IMR-90 (cell line): ENCODE measurements at regions of chr4 and their contacts with region 1.

Region 1: GRCh38 chr4:106253364-106254129 is 62.5 kb downstream of the TBCK start:
- DNase-seq: no peak
- ATAC-seq: no peak
- H3K4me3 ChIP-seq: no peak overlapping the region
- H3K27ac ChIP-seq: no peak overlapping the region
- H3K4me1 ChIP-seq: no peaks in the 10 kb centered on the region
- H3K27me3 ChIP-seq: no peaks in the 10 kb centered on the region
- CTCF ChIP-seq: no peak
- POLR2A ChIP-seq: no peak
- RAD21 ChIP-seq: no peak

Region 2: DNA sequence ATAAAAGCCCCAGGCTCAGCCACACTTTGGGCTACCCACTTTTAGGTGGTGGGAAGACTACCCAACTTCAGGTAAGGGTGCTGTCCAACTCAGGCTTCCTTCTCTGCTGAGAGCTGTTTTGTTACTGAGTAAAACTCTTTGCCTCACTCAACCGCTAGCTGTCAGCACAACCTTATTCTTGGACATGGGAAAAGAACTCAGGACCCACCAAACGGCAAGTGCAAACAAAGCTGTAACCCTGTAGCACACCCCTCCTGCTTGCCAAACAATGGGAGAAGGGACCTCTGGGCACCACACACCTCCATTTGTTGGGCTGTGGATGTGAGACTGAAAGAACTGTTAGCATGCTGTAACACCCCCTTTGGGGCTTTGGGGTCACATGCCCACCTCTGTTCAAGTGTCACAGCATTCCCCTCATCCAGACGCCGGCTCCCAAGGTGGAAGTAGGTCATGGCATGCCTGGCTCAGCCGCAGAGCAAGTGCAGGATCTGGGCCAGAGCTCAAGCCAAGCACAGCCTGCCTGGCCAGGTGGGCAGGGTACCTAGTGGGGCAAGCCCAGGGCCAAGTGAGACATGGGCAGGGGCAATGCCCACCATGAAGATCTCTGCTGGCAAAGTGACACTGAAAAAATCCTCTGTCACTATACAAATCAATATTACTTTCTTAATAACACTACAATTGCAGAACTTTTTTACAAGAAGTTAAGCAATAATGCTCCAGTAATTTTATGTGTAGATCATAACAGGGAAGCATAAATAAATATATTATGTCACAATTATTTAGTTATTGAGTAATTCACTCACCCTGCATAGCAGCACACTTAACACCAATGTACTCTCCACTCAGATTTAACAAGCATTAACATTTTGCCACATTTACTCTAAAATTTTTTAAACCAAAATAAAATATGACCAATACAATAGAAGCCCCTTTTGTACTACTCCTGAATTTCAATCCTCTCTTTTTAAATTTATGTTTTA is 44.8 kb before region 1 on chr4:
- CTCF ChIA-PET with region 1: no interaction called
- POLR2A ChIA-PET with region 1: no interaction called
- dilution Hi-C with region 1: no loop called
- in situ Hi-C with region 1: no loop called
- intact Hi-C with region 1: loop called (anchors 1 kb)
- DNase-seq: no peak
- ATAC-seq: no peak
- H3K4me3 ChIP-seq: no peak overlapping the region
- H3K27ac ChIP-seq: no peak overlapping the region
- H3K4me1 ChIP-seq: no peaks in the 10 kb centered on the region
- H3K27me3 ChIP-seq: no peaks in the 10 kb centered on the region
- CTCF ChIP-seq: no peak
- POLR2A ChIP-seq: no peak
- RAD21 ChIP-seq: no peak

Region 3: DNA sequence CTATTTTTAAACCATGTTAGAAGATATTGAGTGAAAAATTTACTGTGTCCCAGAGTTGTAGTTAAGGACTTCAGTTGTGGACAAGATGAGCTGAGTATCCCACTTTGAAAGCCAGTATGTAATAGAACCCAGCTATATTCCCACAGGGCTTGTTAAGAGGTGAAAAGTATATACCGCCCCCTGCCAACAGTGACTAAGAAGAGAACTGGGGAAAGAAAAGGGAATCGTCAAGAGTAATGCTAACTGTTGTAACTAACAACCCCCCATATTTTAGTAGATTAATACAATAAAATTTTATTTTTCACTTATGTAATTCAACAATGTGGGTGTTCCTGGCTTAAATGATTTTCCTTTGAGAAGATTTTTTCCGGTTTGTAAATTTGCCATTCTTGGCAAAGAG is 365.4 kb after region 1 on chr4:
- CTCF ChIA-PET with region 1: no interaction called
- POLR2A ChIA-PET with region 1: no interaction called
- dilution Hi-C with region 1: no loop called
- in situ Hi-C with region 1: no loop called
- intact Hi-C with region 1: no loop called
- DNase-seq: no peak
- ATAC-seq: no peak
- H3K4me3 ChIP-seq: no peak overlapping the region
- H3K27ac ChIP-seq: no peak overlapping the region
- H3K4me1 ChIP-seq: no peaks in the 10 kb centered on the region
- H3K27me3 ChIP-seq: no peaks in the 10 kb centered on the region
- CTCF ChIP-seq: no peak
- POLR2A ChIP-seq: no peak
- RAD21 ChIP-seq: no peak